ENCODE measurements at regions of chr11 and their contacts with region 1.

Region 1: DNA sequence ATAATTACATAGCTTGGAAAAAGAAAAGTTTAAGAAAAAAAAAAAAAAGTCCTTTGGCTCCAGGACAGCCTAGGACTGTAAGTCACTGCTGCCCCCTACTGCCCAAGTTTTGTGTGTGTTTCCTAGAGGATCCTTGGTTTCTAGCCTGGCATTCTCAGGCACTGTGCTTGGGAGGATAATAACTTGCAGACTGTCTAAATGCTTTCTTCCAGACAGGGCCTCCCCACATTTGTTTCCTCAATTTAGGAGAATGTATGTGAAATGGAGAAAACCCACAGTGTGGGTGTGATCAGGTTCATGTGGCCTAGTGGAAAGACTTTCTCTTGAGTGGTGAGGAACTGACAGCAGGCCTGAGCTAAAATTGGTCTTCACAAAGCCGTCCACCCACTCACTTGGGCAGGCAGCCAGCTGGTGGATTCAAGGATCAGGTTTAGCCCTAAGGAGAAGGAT is 191.0 kb downstream of the NAV2 start:
- DNase-seq: peak; percentile 55 to 77 (median 68)
- ATAC-seq: peak; percentile 94
- H3K4me3 ChIP-seq: no peak overlapping the region
- H3K27ac ChIP-seq: no peak overlapping the region
- H3K4me1 ChIP-seq: no peaks in the 10 kb centered on the region
- H3K27me3 ChIP-seq: peaks cover 0 to 5% of the 10 kb centered on the region in 2 experiments; a peak in 1 of 5 replicates
- CTCF ChIP-seq: peak; percentile 71 to 86 (median 79)
- EP300 ChIP-seq: no peak
- POLR2A ChIP-seq: no peak
- RAD21 ChIP-seq: peak; percentile 58 to 75

Region 2: DNA sequence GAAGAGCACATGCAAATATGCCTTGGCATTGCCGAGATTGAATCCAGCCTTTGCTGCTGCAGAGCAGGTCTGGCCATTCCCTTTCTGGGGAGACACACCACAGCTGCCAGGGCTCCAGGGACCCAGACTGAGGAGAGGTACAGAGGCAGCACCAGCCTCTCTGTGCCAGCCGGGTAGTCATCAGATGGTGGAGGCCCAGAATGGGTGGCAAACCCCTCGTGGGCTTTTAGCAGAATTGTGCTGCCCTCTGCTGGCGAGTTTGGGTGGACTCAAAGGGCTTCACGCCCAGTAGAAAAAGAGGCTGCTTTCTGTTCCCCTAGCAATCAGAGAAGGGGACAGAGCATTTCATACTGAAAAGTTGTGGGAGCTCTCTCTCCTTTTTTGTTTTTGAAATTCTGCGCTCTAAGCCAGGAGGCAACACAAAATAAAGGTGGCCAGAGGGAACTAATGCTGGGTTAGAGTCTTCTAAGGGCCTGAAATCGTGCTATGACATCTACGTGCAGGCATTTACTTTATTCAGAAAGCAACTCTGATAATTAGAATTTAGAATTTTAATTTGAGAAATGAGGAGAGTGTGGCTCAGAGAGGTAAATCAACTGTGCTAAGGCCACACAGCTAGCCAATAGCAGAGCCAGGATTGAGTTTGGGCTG is 349.8 kb before region 1 on chr11:
- CTCF ChIA-PET with region 1: interaction called, 9 read pairs
- POLR2A ChIA-PET with region 1: no interaction called
- in situ Hi-C with region 1: no loop called
- intact Hi-C with region 1: loop called (anchors 1 kb)
- DNase-seq: peak; percentile 55 to 74 (median 64)
- ATAC-seq: peak; percentile 90
- H3K4me3 ChIP-seq: no peak overlapping the region
- H3K27ac ChIP-seq: no peak overlapping the region
- H3K4me1 ChIP-seq: no peaks in the 10 kb centered on the region
- H3K27me3 ChIP-seq: peaks cover 0 to 8% of the 10 kb centered on the region in 2 experiments; a peak in 2 of 5 replicates
- CTCF ChIP-seq: peak; percentile 84 to 89 (median 85)
- EP300 ChIP-seq: no peak
- POLR2A ChIP-seq: no peak
- RAD21 ChIP-seq: peak; percentile 91 to 94

Region 3: DNA sequence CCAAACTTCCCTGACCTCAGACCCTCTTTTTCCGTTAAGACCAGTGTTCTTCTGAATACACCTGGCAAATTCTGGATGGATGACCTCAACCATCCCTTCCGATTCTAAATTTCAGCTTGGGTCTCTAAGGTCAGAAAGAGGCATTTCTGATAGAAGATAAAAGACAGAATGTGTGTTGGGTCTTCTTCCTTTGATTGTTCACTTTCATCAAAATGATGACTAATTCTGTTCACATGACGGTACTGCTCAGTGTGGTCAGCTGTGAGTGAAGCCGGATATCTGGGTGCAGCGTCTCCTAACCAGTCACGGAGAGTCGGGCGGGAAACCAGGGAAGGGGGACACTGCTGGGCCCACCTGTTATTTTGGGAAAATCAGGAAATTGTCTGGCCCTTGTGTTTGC is 342.6 kb before region 1 on chr11:
- CTCF ChIA-PET with region 1: interaction called, 16 read pairs
- POLR2A ChIA-PET with region 1: no interaction called
- in situ Hi-C with region 1: loop called (anchors 5 kb)
- intact Hi-C with region 1: loop called (anchors 1 kb)
- DNase-seq: no peak
- ATAC-seq: no peak
- H3K4me3 ChIP-seq: no peak overlapping the region
- H3K27ac ChIP-seq: no peak overlapping the region
- H3K4me1 ChIP-seq: peaks cover 0 to 5% of the 10 kb centered on the region in 2 experiments; a peak in 1 of 5 replicates
- H3K27me3 ChIP-seq: peaks cover 0 to 17% of the 10 kb centered on the region in 2 experiments; a peak in 2 of 5 replicates
- CTCF ChIP-seq: no peak
- EP300 ChIP-seq: no peak
- POLR2A ChIP-seq: no peak
- RAD21 ChIP-seq: no peak

Region 4: GRCh38 chr11:19566583-19567379 is 336.9 kb before region 1 on chr11:
- CTCF ChIA-PET with region 1: interaction called, 16 read pairs
- POLR2A ChIA-PET with region 1: no interaction called
- in situ Hi-C with region 1: loop called (anchors 5 kb)
- intact Hi-C with region 1: loop called (anchors 2 kb)
- DNase-seq: no peak
- ATAC-seq: no peak
- H3K4me3 ChIP-seq: no peak overlapping the region
- H3K27ac ChIP-seq: no peak overlapping the region
- H3K4me1 ChIP-seq: peaks cover 0 to 5% of the 10 kb centered on the region in 2 experiments; a peak in 1 of 5 replicates
- H3K27me3 ChIP-seq: peaks cover 0 to 13% of the 10 kb centered on the region in 2 experiments; a peak in 2 of 5 replicates
- CTCF ChIP-seq: no peak
- EP300 ChIP-seq: no peak
- POLR2A ChIP-seq: no peak
- RAD21 ChIP-seq: no peak

Region 5: GRCh38 chr11:19742588-19743292 is 160.9 kb before region 1 on chr11:
- CTCF ChIA-PET with region 1: interaction called, 6 read pairs
- POLR2A ChIA-PET with region 1: no interaction called
- in situ Hi-C with region 1: no loop called
- intact Hi-C with region 1: loop called (anchors 10 kb)
- DNase-seq: peak; percentile 41 to 71 (median 48)
- ATAC-seq: peak; percentile 94
- H3K4me3 ChIP-seq: no peak overlapping the region
- H3K27ac ChIP-seq: no peak overlapping the region
- H3K4me1 ChIP-seq: no peaks in the 10 kb centered on the region
- H3K27me3 ChIP-seq: peaks cover 0 to 14% of the 10 kb centered on the region in 2 experiments; a peak in 1 of 5 replicates
- CTCF ChIP-seq: peak; percentile 78 to 82 (median 81)
- EP300 ChIP-seq: no peak
- POLR2A ChIP-seq: no peak
- RAD21 ChIP-seq: peak; percentile 94 to 95

Region 6: DNA sequence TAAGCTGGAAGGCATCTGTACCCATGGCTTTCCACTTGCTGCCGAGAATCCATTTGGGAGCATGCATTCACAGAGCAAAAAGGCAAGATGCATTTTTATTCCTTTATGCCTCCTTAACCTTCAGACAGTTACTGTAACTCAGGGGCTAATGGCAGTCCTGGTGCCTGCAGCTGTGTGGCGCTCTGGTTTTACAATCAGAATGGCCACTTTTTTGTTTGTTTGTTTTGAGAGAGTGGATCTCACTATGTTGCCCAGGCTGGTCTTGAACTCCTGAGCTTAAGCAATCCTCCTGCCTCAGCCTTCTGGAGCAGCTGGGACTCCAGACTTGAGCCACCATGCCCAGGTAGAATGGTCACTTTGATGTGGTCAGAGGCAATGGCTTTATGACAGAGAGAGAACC is 89.2 kb before region 1 on chr11:
- CTCF ChIA-PET with region 1: no interaction called
- POLR2A ChIA-PET with region 1: no interaction called
- in situ Hi-C with region 1: no loop called
- intact Hi-C with region 1: loop called (anchors 5 kb)
- DNase-seq: no peak
- ATAC-seq: peak; percentile 42; the same call in 2 of the 3 replicates
- H3K4me3 ChIP-seq: no peak overlapping the region
- H3K27ac ChIP-seq: no peak overlapping the region
- H3K4me1 ChIP-seq: no peaks in the 10 kb centered on the region
- H3K27me3 ChIP-seq: peaks cover 0 to 15% of the 10 kb centered on the region in 2 experiments; a peak in 4 of 5 replicates
- CTCF ChIP-seq: peak in 2 of 3 experiments; percentile 16 to 43; a peak in 2 of 6 replicates
- EP300 ChIP-seq: no peak
- POLR2A ChIP-seq: no peak
- RAD21 ChIP-seq: peak in 1 of 2 experiments; percentile 38; a peak in 2 of 4 replicates

Region 7: DNA sequence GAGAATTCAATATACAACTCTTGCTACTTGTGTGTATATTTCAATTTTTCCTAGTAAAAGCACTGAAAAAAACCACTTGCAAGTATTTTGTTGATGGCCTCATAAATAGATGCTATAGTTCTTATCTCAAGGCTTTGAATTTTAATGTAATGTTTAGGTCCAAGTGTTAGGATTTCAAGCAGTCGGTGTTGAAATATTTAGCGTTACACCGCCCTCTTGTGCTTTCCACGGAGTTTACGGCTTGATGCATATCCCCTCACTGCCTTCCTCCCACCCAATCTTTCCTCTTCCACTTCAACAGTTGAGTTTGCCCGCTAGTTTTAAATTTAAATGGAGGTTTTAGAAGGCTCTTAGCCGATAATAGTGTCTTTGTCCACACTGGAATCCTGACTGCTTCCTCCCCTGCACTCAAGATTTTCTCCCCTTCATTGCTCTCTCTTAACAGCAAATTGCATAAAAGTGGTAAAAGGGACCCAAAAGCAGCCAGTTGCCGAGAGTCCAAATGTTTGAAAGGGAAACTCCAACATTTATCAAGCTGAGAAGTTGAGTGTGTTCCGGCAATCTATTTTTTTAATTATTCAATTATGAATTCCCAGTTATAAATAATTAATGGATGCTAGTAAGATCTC is 434.0 kb after region 1 on chr11:
- CTCF ChIA-PET with region 1: interaction called, 3 read pairs
- POLR2A ChIA-PET with region 1: no interaction called
- in situ Hi-C with region 1: no loop called
- intact Hi-C with region 1: loop called (anchors 5 kb)
- DNase-seq: peak in 2 of 4 experiments; percentile 30 to 46
- ATAC-seq: peak; percentile 90
- H3K4me3 ChIP-seq: no peak overlapping the region
- H3K27ac ChIP-seq: no peak overlapping the region
- H3K4me1 ChIP-seq: peaks cover 0 to 4% of the 10 kb centered on the region in 2 experiments; a peak in 2 of 5 replicates
- H3K27me3 ChIP-seq: peaks cover 3 to 16% of the 10 kb centered on the region in 2 experiments; a peak in 4 of 5 replicates
- CTCF ChIP-seq: peak; percentile 40 to 55 (median 53)
- EP300 ChIP-seq: no peak
- POLR2A ChIP-seq: no peak
- RAD21 ChIP-seq: peak in 1 of 2 experiments; percentile 62; a peak in 2 of 4 replicates

Measured in K562 (cell line).